Aorta (tissue), 5 donors: ENCODE measurements at regions of chr2 and their contacts with region 1.

Region 1: DNA sequence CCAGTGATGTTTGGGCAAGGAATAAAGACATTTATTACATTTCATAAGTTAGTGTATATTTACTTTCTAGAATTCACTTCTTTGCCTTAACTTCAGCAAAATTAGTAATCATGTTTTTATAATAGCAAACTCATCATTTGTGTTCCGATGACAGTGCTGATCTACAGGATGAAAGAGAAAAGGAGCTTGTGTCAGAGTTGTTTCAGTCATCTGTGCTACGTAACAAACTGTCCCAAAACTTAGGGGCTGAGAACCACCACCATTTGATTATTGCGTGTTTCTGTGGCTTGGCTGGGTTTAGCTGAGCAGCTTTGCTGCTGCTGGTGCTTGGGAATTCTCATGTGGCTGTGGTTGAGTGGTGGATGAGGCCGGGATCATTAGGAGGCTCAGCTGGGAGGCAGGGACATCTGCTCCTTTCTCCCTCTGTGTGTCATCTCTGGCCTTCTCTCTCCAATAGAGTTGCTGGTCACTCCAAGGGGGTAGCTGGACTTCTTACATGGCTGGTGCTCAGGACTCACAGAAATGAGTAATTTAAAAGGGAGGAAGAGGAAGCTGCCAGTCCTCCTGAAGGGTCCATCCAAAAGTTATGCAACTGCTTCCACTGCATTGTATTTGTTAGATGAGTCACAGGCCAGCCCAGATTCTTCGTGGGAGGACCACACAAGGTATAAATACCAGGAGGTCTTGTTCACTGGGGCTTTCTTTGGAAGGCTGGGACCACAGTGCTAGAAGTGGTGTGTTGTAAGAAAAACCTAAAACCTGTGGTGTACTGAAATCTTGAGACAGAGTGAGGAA is 43.4 kb upstream of the HAAO start:
- DNase-seq: peak in 1 of 2 donors; percentile 75
- ATAC-seq: peak; percentile 83
- H3K4me3 ChIP-seq: no peak overlapping the region
- H3K27ac ChIP-seq: peak overlapping the region in 1 of 2 donors; percentile 52
- H3K4me1 ChIP-seq: no peaks in the 10 kb centered on the region
- H3K27me3 ChIP-seq: no peaks in the 10 kb centered on the region

Region 2: GRCh38 chr2:42967959-42968674 is 132.3 kb after region 1 on chr2:
- intact Hi-C with region 1: no loop called
- DNase-seq: peak; percentile 85
- ATAC-seq: peak; percentile 81
- H3K4me3 ChIP-seq: no peak overlapping the region
- H3K27ac ChIP-seq: peak overlapping the region in 1 of 2 donors; percentile 46
- H3K4me1 ChIP-seq: no peaks in the 10 kb centered on the region
- H3K27me3 ChIP-seq: no peaks in the 10 kb centered on the region

Region 3: GRCh38 chr2:43576981-43577892 is 741.5 kb after region 1 on chr2:
- intact Hi-C with region 1: loop called in 1 of 2 experiments (anchors 10 kb)
- DNase-seq: peak in 1 of 2 donors; percentile 51
- ATAC-seq: no peak
- H3K4me3 ChIP-seq: no peak overlapping the region
- H3K27ac ChIP-seq: peak overlapping the region in 1 of 2 donors; percentile 67
- H3K4me1 ChIP-seq: no peaks in the 10 kb centered on the region
- H3K27me3 ChIP-seq: no peaks in the 10 kb centered on the region